ENCODE measurements at regions of chr1 and their contacts with region 1.

Region 1: GRCh38 chr1:162069328-162070093 is at the start of gene NOS1AP:
- DNase-seq: peak; percentile 65 to 73 (median 70)
- H3K4me3 ChIP-seq: peak within 1 kb of the TSS in 1 of 2 donors; percentile 40
- H3K4me3 Mint-ChIP-seq: peak within 1 kb of the TSS; percentile 80 to 87 (median 84)
- H3K27ac ChIP-seq: no peak within 1 kb of the TSS
- H3K27ac Mint-ChIP-seq: peak within 1 kb of the TSS in 3 of 7 donors; percentile 42 to 69 (median 49)
- H3K4me1 ChIP-seq: peaks cover 16% of the 10 kb centered on the region
- H3K4me1 Mint-ChIP-seq: peaks cover 5 to 16% (median 6%) of the 10 kb centered on the region in 4 donors
- H3K27me3 ChIP-seq: peaks cover 27% of the 10 kb centered on the region
- H3K27me3 Mint-ChIP-seq: peaks cover 33 to 60% of the 10 kb centered on the region in 2 donors
- total RNA-seq, gene NOS1AP: not detected

Region 2: DNA sequence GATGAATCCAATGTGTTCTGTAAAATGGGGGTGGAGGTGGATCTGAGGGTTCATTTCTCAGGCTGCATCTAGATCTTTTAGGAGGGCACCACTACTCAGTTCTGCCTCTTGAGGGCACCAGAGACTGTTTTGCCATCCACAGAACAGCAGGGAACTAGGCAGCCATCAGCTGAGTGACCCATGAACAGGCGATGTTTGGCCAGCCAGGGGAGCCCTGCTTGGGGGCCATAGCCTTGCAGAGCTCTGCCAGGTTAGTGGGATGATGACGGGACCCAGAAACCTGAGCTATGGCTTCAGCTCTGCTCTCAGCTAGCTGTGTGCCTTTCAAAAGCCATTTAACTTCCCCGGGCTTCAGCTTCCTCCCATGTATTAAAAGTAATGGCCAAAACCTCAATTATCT is 13.5 kb before region 1 on chr1:
- CTCF ChIA-PET with region 1: interaction called, 11 read pairs
- POLR2A ChIA-PET with region 1: no interaction called
- intact Hi-C with region 1: no loop called
- DNase-seq: peak in 4 of 5 donors; percentile 25 to 41 (median 30)
- H3K4me3 ChIP-seq: no peak overlapping the region
- H3K4me3 Mint-ChIP-seq: no peak overlapping the region
- H3K27ac ChIP-seq: no peak overlapping the region
- H3K27ac Mint-ChIP-seq: no peak overlapping the region
- H3K4me1 ChIP-seq: no peaks in the 10 kb centered on the region
- H3K4me1 Mint-ChIP-seq: no peaks in the 10 kb centered on the region
- H3K27me3 ChIP-seq: no peaks in the 10 kb centered on the region
- H3K27me3 Mint-ChIP-seq: peaks cover 8 to 11% of the 10 kb centered on the region in 2 donors

Region 3: DNA sequence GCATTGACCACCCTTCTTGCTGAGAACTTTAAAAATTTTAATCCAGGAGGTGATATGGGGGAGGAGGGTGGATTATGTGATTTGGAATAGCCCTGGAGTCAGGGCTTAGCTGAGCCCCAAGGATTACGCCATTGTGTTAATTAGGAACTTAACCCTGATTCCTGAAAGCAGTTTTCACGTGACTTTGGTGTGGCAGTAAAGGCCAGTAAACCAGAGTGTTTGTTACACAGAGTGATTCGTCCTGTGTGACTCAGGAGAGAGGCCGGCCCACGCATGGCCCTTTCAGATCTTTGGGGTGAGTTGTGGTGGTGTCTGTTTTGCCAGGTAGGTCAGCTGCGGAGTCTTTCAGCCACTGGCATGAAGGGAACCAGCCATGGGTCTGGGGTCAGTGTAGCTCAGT is 107.6 kb after region 1 on chr1:
- CTCF ChIA-PET with region 1: no interaction called
- POLR2A ChIA-PET with region 1: no interaction called
- intact Hi-C with region 1: no loop called
- DNase-seq: no peak
- H3K4me3 ChIP-seq: no peak overlapping the region
- H3K4me3 Mint-ChIP-seq: no peak overlapping the region
- H3K27ac ChIP-seq: no peak overlapping the region
- H3K27ac Mint-ChIP-seq: no peak overlapping the region
- H3K4me1 ChIP-seq: no peaks in the 10 kb centered on the region
- H3K4me1 Mint-ChIP-seq: no peaks in the 10 kb centered on the region
- H3K27me3 ChIP-seq: no peaks in the 10 kb centered on the region
- H3K27me3 Mint-ChIP-seq: peaks cover 6 to 8% of the 10 kb centered on the region in 2 donors

Measured in CD4-positive, alpha-beta memory T cell (primary cell).